ENCODE measurements at regions of chr4 and their contacts with region 1.

Region 1: DNA sequence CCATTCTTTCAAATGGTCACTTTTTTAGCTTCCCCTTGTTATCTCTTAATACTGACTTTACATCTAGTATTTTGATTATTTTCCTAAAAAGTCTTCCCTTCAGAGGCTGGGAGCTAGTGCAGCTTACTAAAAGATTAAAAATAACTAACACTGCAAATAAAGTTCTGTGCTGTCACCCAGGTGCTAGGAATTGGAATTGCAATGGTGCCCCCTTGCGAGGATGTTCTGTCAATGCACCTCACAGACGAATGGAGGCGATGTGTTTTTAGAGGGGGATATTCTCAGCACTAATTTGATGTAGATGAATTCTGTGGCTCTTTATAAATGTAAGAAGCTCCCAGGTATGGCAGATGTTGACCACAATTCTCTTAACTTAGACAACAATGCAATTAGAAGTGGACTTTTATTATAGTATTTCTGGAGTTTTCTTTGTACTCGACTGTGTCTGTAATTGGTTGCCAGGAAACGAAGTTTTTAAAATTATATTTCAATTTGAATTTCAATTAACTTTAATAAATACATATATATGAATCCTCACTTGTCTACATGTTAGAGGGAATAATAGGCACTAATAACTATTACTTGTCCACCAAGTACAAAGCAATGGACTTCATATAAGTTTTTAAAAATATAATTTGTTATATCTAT is 22.0 kb upstream of the SMIM31 start:
- DNase-seq: peak; percentile 60
- ATAC-seq: no peak

Region 2: GRCh38 chr4:163554870-163555465 is 1177.0 kb before region 1 on chr4:
- intact Hi-C with region 1: loop called (anchors 10 kb)
- DNase-seq: no peak
- ATAC-seq: no peak

Region 3: DNA sequence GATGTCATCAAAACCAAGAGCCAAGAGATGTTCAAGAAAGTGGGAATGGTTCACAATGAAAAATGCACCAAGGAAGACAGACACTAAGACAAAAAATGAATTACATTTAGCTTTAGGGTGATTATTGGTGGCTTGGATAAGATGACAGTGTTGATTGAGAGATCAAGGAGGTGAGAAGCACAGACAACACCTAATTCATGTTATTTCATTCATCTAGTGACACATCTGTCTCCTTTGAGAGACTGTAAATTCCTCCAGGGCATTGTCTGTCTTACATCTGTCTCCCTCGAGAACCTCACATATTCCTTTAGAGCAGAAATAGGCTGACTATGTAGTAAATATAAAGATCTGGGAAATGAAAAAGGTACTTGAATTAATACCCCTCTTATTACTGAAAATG is 72.2 kb before region 1 on chr4:
- intact Hi-C with region 1: no loop called
- DNase-seq: no peak
- ATAC-seq: no peak

Region 4: GRCh38 chr4:164799410-164799809 is 67.5 kb after region 1 on chr4:
- intact Hi-C with region 1: no loop called
- DNase-seq: no peak
- ATAC-seq: no peak

Measured in sciatic nerve (tissue), 2 donors.